Sciatic nerve (tissue), 2 donors: ENCODE measurements at regions of chr3 and their contacts with region 1.

Region 1: DNA sequence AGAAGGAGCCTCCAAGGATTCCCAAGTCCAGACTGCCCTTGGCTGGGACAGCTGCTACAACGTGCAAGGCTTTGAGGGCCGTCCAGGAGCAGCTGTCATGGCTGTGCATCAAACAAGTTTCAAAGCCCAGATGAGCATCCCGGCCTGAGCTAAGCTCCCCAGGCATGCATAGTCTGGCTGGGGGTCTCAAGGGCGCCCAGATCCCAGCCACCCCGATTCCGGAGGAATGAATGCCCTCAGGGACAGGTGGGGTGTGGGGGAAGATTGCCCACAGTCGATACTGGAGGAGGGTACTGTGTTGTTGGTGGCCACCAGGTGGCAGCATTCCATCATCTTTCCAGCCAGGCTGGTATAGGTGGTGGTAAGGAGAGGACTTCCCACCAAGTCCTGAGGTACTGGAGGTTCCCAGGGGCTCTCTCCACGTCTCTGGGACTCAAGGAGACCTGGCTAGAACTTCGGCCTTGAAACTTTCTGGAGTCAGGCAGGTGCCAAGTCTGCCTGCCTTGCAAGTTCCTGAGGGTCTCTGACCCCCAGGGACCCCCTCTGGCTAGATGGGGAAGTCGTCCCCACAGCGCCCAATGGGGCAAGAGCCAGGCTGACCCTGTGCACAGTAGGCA is 32.8 kb downstream of the RBM5 start:
- DNase-seq: peak; percentile 90
- ATAC-seq: peak; percentile 88

Region 2: GRCh38 chr3:49972656-49973055 is 148.9 kb before region 1 on chr3:
- intact Hi-C with region 1: no loop called
- DNase-seq: no peak
- ATAC-seq: no peak

Region 3: GRCh38 chr3:50088725-50089608 is 32.6 kb before region 1 on chr3 and contains the start of gene RBM5:
- intact Hi-C with region 1: no loop called
- DNase-seq: peak; percentile 96
- ATAC-seq: peak; percentile 100
- total RNA-seq, gene RBM5: 231 TPM

Region 4: GRCh38 chr3:50189274-50189673 is 67.8 kb after region 1 on chr3:
- intact Hi-C with region 1: loop called (anchors 2 kb)
- DNase-seq: peak; percentile 83
- ATAC-seq: peak; percentile 79